Naive thymus-derived CD4-positive, alpha-beta T cell (primary cell): ENCODE measurements at regions of chr11 and their contacts with region 1.

Region 1: DNA sequence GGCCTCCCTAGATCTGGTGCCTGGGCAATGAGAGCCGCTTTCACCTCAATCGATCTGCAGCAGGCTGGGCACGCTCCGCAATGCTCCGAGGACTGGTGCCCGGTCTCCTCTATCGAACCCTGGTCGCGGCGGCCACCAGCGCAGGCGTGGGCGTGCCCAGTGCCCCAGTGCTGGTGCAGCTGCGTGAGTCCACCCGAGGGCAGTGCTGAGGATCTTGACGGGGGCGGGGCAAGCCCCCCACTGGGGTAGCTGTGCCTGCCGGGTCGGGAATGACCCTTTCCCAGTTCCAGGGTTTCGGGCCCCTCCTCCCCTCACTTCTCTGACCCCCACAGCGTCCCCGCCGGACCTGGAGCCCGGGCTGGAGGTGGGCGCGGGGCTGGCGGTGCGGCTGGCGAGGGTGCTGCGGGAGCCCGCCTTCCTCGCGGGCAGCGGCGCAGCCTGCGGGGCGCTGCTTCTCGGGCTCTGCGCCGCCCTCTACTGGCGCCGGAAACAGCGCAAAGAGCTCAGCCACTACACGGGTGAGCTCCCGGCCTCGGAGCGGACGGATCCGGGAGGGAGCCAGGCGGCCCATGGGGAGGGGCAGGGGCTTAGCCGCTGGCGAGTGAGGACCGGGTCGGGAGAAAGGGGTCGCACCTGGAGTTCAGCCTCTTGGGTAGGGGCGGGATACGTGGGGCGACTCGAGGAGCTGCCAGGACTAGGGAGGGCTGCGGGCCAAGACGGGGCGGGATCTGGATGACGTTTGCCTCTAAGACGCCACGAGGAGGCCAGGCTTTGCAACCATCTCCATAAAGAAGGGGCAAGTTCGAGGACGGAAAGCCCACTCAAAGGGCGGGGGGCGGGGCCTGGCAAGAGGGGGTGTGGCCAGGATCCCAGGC is 10.9 kb downstream of the ROBO3 start:
- DNase-seq: peak; percentile 71 to 84 (median 81)
- ATAC-seq: peak; percentile 94
- H3K4me3 ChIP-seq: peak overlapping the region; percentile 98
- H3K4me3 Mint-ChIP-seq: peak overlapping the region; percentile 85 to 94 (median 90)
- H3K27ac ChIP-seq: peak overlapping the region; percentile 79
- H3K27ac Mint-ChIP-seq: peak overlapping the region; percentile 77 to 95 (median 92)
- H3K4me1 ChIP-seq: peaks cover 7 to 9% of the 10 kb centered on the region in 2 donors
- H3K4me1 Mint-ChIP-seq: peaks cover 11 to 34% (median 24%) of the 10 kb centered on the region in 7 donors
- H3K27me3 ChIP-seq: peaks cover 0 to 3% of the 10 kb centered on the region in 2 donors
- H3K27me3 Mint-ChIP-seq: peaks cover 18 to 49% (median 34%) of the 10 kb centered on the region in 5 donors

Region 2: DNA sequence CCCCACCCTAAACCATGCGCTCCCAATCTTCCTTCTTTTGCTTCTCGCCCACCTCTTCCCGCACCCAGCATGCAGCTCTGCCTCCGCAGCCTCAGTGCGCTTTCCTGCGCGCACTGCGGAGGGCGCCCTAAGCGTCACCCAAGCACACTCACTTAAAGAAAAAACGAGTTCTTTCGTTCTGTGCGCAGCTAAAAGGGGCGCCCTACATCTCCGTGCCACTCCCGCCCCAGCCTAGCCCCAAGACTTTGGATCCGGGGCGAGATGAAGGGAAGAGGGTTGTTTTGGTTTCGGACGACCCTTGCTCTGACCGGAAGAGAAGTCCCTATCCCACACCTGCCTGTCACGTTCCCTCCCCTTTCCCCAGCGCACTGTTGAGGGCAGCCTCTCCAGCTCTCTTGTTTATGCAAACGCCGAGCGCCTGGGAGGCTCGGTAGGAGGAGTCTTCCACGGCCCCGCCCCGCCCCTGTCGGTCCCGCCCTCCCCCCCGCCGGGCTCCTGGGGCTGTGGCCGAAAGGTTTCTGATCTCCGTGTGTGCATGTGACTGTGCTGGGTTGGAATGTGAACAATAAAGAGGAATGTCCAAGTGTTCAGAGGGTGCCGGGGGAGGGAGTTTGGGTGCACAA is 129.4 kb before region 1 on chr11:
- CTCF ChIA-PET with region 1: interaction called, 3 read pairs
- POLR2A ChIA-PET with region 1: no interaction called
- intact Hi-C with region 1: loop called (anchors 2 kb)
- DNase-seq: peak; percentile 66 to 88 (median 85)
- ATAC-seq: peak; percentile 93
- H3K4me3 ChIP-seq: peak overlapping the region; percentile 99
- H3K4me3 Mint-ChIP-seq: peak overlapping the region; percentile 91 to 100 (median 98)
- H3K27ac ChIP-seq: peak overlapping the region; percentile 72
- H3K27ac Mint-ChIP-seq: peak overlapping the region; percentile 91 to 98 (median 96)
- H3K4me1 ChIP-seq: peaks cover 0 to 3% of the 10 kb centered on the region in 2 donors
- H3K4me1 Mint-ChIP-seq: peaks cover 4 to 37% (median 19%) of the 10 kb centered on the region in 7 donors
- H3K27me3 ChIP-seq: no peaks in the 10 kb centered on the region
- H3K27me3 Mint-ChIP-seq: peaks cover 0 to 22% (median 0%) of the 10 kb centered on the region in 5 donors

Region 3: DNA sequence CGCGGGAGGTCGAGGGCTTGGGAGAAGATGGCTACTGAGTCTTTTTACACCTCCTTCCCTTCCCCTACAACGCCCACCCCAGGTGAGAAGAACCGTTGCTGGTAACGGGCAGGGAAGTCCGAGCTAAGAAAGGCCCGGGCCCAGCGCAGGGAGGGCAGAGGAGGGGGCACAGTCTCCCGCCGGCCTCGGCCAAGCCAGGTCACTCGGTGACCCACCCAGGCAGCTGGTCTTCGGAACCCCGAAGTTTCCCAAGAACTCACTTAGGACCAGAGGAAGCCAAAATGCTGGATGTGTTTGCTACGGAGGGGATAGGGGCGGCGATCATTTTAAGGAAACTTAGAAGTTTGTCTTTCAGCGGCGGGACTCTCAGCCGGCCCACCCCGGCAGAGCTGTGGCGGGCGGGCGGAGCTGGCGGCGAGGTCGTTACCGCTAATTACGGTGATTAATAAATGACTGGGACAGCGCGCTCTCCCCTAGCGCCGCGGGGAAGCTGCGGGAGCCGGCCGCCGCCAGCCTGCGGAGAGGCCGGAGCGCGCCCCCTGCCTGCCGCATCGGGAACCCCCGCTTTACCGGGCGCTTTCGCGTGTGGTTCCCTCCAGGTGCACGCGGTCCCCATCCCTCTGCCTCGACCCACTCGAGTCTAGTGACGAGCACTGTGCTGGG is 10.1 kb before region 1 on chr11:
- CTCF ChIA-PET with region 1: interaction called, 8 read pairs
- POLR2A ChIA-PET with region 1: interaction called, 5 read pairs
- intact Hi-C with region 1: loop called (anchors 1 kb)
- DNase-seq: peak in 8 of 9 donors; percentile 27 to 61 (median 46)
- ATAC-seq: peak; percentile 72
- H3K4me3 ChIP-seq: no peak overlapping the region
- H3K4me3 Mint-ChIP-seq: peak overlapping the region in 7 of 10 donors; percentile 37 to 68 (median 51)
- H3K27ac ChIP-seq: no peak overlapping the region
- H3K27ac Mint-ChIP-seq: peak overlapping the region in 1 of 9 donors; percentile 54
- H3K4me1 ChIP-seq: peaks cover 5 to 29% of the 10 kb centered on the region in 2 donors
- H3K4me1 Mint-ChIP-seq: peaks cover 7 to 67% (median 43%) of the 10 kb centered on the region in 7 donors
- H3K27me3 ChIP-seq: peaks cover 20 to 70% of the 10 kb centered on the region in 2 donors
- H3K27me3 Mint-ChIP-seq: peaks cover 80 to 97% (median 91%) of the 10 kb centered on the region in 5 donors

Region 4: GRCh38 chr11:125141686-125142535 is 265.7 kb after region 1 on chr11:
- CTCF ChIA-PET with region 1: interaction called, 5 read pairs
- POLR2A ChIA-PET with region 1: no interaction called
- intact Hi-C with region 1: loop called in 1 of 2 experiments (anchors 5 kb)
- DNase-seq: peak; percentile 21 to 73 (median 48)
- ATAC-seq: peak; percentile 95
- H3K4me3 ChIP-seq: no peak overlapping the region
- H3K4me3 Mint-ChIP-seq: peak overlapping the region in 3 of 10 donors; percentile 10 to 49 (median 20)
- H3K27ac ChIP-seq: no peak overlapping the region
- H3K27ac Mint-ChIP-seq: no peak overlapping the region
- H3K4me1 ChIP-seq: no peaks in the 10 kb centered on the region
- H3K4me1 Mint-ChIP-seq: peaks cover 0 to 6% (median 5%) of the 10 kb centered on the region in 7 donors
- H3K27me3 ChIP-seq: peaks cover 0 to 5% of the 10 kb centered on the region in 2 donors
- H3K27me3 Mint-ChIP-seq: peaks cover 15 to 47% (median 27%) of the 10 kb centered on the region in 5 donors